Common myeloid progenitor, CD34-positive (primary cell): ENCODE measurements at regions of chr20 and their contacts with region 1.

Region 1: DNA sequence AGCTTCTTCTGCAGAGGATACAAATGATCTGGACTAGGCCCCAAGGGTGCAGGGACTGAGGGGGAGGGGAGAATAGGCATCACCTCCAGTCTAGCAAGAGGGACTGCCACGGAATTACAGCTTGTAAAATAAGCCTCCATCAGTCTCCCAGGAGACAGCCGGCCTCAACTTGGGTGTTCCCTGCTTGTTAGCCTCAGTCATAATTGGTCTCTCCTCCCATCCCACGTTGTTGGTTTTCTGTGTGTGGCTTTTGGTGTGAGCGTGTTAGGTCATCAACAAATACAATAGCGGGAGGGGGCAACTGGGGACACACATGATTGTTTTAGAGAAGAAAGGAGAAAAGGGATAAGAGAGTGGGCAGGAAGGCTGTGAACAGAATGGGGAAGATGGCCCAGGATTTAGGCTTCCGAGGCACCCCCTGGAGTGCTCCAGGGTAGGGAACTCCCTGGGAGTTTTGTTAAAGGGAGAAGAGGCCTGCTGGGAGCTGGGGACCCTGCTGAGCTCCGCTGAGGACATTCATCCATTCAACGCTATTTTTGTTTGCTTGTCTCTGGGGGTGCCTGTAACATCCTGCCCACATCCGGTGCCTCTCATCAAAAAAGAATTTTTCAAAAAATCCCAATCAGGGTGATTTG is 9.2 kb downstream of the FOXA2 start:
- DNase-seq: no peak
- H3K4me3 ChIP-seq: no peak overlapping the region
- H3K27ac ChIP-seq: no peak overlapping the region
- H3K4me1 ChIP-seq: peaks cover 0 to 8% (median 2%) of the 10 kb centered on the region in 4 experiments
- H3K27me3 ChIP-seq: peaks cover 37 to 100% (median 59%) of the 10 kb centered on the region in 5 experiments

Region 2: GRCh38 chr20:22475662-22476061 is 99.5 kb before region 1 on chr20:
- CTCF ChIA-PET with region 1: no interaction called
- POLR2A ChIA-PET with region 1: no interaction called
- DNase-seq: no peak
- H3K4me3 ChIP-seq: no peak overlapping the region
- H3K27ac ChIP-seq: no peak overlapping the region
- H3K4me1 ChIP-seq: no peaks in the 10 kb centered on the region
- H3K27me3 ChIP-seq: peaks cover 0 to 9% (median 1%) of the 10 kb centered on the region in 5 experiments

Region 3: DNA sequence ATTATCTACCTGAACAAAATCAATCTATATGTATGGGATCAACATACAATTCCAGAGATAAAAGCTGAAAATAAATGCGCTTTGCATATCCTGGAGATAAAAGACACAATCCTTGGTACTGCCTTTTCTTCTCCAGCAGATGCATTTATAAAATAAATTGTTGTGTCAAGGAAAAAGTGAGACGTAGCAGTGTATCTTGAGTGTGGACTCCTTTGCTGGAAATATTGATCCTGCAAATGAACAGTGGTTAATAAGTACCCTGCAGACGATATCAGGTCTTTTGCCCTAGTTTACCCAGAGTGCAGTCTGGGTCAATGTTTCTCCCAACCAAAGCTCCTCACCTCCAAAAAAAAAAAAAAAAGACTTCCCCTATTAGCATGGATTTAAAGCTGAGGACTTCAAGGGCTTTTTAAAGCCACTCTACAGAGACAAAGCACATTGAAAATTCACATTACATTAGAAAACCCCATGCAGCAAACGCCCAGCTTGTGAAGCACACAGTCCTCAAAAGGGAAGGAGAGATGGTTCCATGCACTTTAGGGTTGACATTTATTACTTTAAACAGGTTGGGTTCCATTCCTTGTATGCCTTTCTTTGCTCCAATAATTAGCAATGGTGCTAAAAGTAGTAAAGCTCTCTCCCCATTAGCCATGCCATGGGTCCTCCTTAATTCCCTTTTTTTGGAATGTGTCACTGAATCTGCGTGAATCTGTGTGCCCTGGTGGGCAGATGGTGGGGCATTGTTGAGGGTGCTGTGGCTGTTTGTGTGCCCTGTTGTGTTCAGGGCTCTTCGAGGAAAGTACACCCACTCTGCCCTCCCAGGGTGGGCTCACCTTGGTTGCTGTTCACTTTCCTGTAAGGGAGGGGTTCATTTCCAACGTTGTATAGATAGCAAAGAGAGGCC is 11.9 kb before region 1 on chr20:
- CTCF ChIA-PET with region 1: interaction called, 14 read pairs
- POLR2A ChIA-PET with region 1: interaction called, 5 read pairs
- DNase-seq: no peak
- H3K4me3 ChIP-seq: no peak overlapping the region
- H3K27ac ChIP-seq: no peak overlapping the region
- H3K4me1 ChIP-seq: no peaks in the 10 kb centered on the region
- H3K27me3 ChIP-seq: peaks cover 43 to 100% (median 63%) of the 10 kb centered on the region in 5 experiments

Region 4: GRCh38 chr20:22611636-22612035 is 36.4 kb after region 1 on chr20:
- CTCF ChIA-PET with region 1: no interaction called
- POLR2A ChIA-PET with region 1: no interaction called
- DNase-seq: no peak
- H3K4me3 ChIP-seq: no peak overlapping the region
- H3K27ac ChIP-seq: no peak overlapping the region
- H3K4me1 ChIP-seq: no peaks in the 10 kb centered on the region
- H3K27me3 ChIP-seq: peaks cover 3 to 36% (median 12%) of the 10 kb centered on the region in 5 experiments